ENCODE measurements at regions of chr12 and their contacts with region 1.

Region 1: DNA sequence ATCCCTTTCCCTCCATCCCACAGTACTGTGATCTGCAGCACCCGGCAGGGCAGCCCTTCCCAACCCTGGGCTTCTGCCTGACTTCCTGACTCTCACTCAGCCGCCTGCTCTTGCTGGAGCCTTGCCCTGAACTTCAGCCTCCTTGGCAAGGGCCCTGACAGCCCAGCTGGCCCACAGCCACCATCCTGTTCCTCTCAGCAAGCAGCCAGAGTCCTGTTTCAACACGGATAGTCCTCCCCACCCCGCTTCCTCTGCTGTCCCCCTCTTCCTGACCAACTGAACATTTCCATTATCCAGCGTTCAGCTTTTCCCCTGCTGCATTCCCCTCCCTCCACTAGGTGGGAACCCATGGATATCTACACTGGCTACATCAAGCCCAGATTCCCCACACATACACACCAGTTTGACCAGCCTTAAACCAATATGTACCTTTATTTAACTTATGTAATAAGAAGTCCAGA is 74.0 kb upstream of the MDM1 start:
- DNase-seq: peak; percentile 96
- H3K4me3 ChIP-seq: no peak overlapping the region
- H3K27ac ChIP-seq: no peak overlapping the region
- H3K4me1 ChIP-seq: peaks cover 21% of the 10 kb centered on the region
- H3K27me3 ChIP-seq: peaks cover 0 to 2% of the 10 kb centered on the region in 2 experiments
- CTCF ChIP-seq: peak; percentile 34 to 66
- POLR2A ChIP-seq: no peak

Region 2: GRCh38 chr12:67052981-67053380 is 1353.2 kb before region 1 on chr12:
- CTCF ChIA-PET with region 1: no interaction called
- POLR2A ChIA-PET with region 1: no interaction called
- dilution Hi-C with region 1: no loop called
- intact Hi-C with region 1: no loop called
- DNase-seq: no peak
- H3K4me3 ChIP-seq: no peak overlapping the region
- H3K27ac ChIP-seq: no peak overlapping the region
- H3K4me1 ChIP-seq: no peaks in the 10 kb centered on the region
- H3K27me3 ChIP-seq: no peaks in the 10 kb centered on the region
- CTCF ChIP-seq: no peak
- POLR2A ChIP-seq: no peak

Region 3: GRCh38 chr12:68364893-68365725 is 41.1 kb before region 1 on chr12:
- CTCF ChIA-PET with region 1: interaction called, 8 read pairs
- POLR2A ChIA-PET with region 1: interaction called, 3 read pairs
- dilution Hi-C with region 1: no loop called
- intact Hi-C with region 1: loop called (anchors 1 kb)
- DNase-seq: peak; percentile 90
- H3K4me3 ChIP-seq: peak overlapping the region; percentile 4 to 31 (median 29)
- H3K27ac ChIP-seq: peak overlapping the region; percentile 54
- H3K4me1 ChIP-seq: peaks cover 11% of the 10 kb centered on the region
- H3K27me3 ChIP-seq: peaks cover 2 to 3% of the 10 kb centered on the region in 2 experiments
- CTCF ChIP-seq: no peak
- POLR2A ChIP-seq: peak; percentile 52

Region 4: GRCh38 chr12:68377881-68378280 is 28.3 kb before region 1 on chr12:
- CTCF ChIA-PET with region 1: no interaction called
- POLR2A ChIA-PET with region 1: interaction called, 10 read pairs
- dilution Hi-C with region 1: no loop called
- intact Hi-C with region 1: no loop called
- DNase-seq: no peak
- H3K4me3 ChIP-seq: no peak overlapping the region
- H3K27ac ChIP-seq: no peak overlapping the region
- H3K4me1 ChIP-seq: no peaks in the 10 kb centered on the region
- H3K27me3 ChIP-seq: peaks cover 9 to 18% of the 10 kb centered on the region in 2 experiments
- CTCF ChIP-seq: no peak
- POLR2A ChIP-seq: no peak

Region 5: DNA sequence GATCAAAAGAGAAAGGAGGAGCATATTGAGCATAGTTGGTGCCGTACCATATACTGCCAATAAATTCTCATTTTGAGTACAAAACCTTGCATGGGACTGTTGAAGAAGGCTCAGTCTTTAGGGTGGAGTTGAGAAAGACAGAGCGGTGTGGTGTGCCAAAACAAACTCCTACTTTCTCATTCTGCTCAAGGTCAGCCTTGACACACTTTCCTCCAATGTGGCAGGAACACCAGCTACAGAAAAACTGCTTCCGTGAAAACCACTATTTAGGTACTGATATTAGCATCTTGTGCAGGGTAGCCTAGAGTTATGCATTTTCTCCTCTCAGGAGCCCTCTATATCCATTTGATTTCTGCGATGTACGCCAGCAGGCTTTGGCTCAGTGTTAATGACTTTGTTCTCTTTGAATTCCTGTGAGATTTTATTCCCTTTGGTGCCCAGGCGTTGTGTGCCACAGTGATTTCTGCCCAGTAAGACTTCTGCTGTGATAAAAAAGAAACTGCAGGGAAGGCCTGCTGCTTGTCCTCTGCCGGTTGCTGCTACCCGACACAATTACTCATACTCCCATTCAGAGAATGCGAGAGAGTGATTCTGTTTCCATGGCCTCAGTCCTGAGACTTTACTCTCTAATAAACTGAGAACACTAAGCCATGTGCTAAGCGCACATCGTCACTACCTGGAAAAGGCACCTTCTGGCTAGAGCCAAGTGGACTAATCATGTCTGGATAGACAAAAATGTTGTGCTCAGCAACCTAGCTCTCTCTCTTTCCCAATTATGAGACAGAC is 14.3 kb after region 1 on chr12:
- CTCF ChIA-PET with region 1: interaction called, 14 read pairs
- POLR2A ChIA-PET with region 1: no interaction called
- dilution Hi-C with region 1: no loop called
- intact Hi-C with region 1: loop called (anchors 1 kb)
- DNase-seq: peak; percentile 19
- H3K4me3 ChIP-seq: no peak overlapping the region
- H3K27ac ChIP-seq: no peak overlapping the region
- H3K4me1 ChIP-seq: peaks cover 6% of the 10 kb centered on the region
- H3K27me3 ChIP-seq: no peaks in the 10 kb centered on the region
- CTCF ChIP-seq: no peak
- POLR2A ChIP-seq: no peak

Region 6: GRCh38 chr12:68432622-68433021 is 26.5 kb after region 1 on chr12:
- CTCF ChIA-PET with region 1: no interaction called
- POLR2A ChIA-PET with region 1: no interaction called
- dilution Hi-C with region 1: no loop called
- intact Hi-C with region 1: no loop called
- DNase-seq: no peak
- H3K4me3 ChIP-seq: no peak overlapping the region
- H3K27ac ChIP-seq: no peak overlapping the region
- H3K4me1 ChIP-seq: no peaks in the 10 kb centered on the region
- H3K27me3 ChIP-seq: no peaks in the 10 kb centered on the region
- CTCF ChIP-seq: no peak
- POLR2A ChIP-seq: no peak

Region 7: DNA sequence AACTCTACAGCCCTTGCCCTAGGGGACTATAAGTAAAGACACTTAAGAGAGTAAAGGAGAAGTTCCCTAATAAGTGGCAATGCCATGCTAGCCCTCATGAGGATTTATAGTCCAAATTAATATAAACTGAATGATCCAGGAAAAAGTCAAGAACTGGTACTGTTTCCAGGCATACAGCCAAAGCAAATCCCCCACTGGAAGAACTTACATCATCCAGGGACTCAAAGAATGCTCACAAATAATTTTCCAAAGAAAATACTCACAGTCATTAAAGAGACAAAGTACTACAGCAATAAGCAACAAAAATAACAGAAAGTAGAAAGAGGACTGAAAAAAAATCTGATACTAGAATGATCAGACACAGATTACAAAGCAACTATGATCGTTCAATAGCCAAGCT is 124.8 kb after region 1 on chr12:
- CTCF ChIA-PET with region 1: no interaction called
- POLR2A ChIA-PET with region 1: no interaction called
- dilution Hi-C with region 1: no loop called
- intact Hi-C with region 1: no loop called
- DNase-seq: peak; percentile 89
- H3K4me3 ChIP-seq: no peak overlapping the region
- H3K27ac ChIP-seq: no peak overlapping the region
- H3K4me1 ChIP-seq: peaks cover 2% of the 10 kb centered on the region
- H3K27me3 ChIP-seq: no peaks in the 10 kb centered on the region
- CTCF ChIP-seq: no peak
- POLR2A ChIP-seq: no peak

Measured in endothelial cell of umbilical vein (primary cell).